Left colon (tissue), 2 donors: ENCODE measurements at regions of chr5 and their contacts with region 1.

Region 1: GRCh38 chr5:88845081-88845697 is 37.8 kb downstream of the MEF2C start:
- DNase-seq: no peak
- ATAC-seq: no peak

Region 2: GRCh38 chr5:88226881-88227450 is 618.2 kb before region 1 on chr5:
- intact Hi-C with region 1: no loop called
- DNase-seq: no peak
- ATAC-seq: no peak

Region 3: GRCh38 chr5:88952344-88952743 is 107.2 kb after region 1 on chr5:
- intact Hi-C with region 1: no loop called
- DNase-seq: no peak
- ATAC-seq: no peak

Region 4: DNA sequence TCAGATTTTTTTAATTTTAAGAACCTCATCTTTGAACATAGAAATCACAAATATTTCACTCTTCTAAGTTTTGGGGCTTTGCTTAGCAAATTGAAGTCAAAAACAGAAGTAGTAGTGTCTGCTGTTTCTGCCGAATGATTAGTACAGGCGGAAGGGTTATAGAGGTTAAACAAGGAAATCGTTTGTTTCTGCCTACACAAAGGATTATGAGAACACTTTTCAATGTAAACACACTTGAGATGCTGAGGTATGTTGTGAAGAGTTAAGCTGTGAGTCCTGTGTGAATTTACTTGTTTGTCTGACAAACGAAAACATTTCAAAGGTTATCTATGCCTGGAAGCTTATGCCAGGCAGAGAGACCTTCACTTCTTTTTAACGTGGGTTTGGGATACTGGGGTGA is 1339.6 kb after region 1 on chr5:
- intact Hi-C with region 1: loop called in 1 of 2 experiments (anchors 5 kb)
- DNase-seq: no peak
- ATAC-seq: no peak